ENCODE measurements at regions of chr10 and their contacts with region 1.

Region 1: DNA sequence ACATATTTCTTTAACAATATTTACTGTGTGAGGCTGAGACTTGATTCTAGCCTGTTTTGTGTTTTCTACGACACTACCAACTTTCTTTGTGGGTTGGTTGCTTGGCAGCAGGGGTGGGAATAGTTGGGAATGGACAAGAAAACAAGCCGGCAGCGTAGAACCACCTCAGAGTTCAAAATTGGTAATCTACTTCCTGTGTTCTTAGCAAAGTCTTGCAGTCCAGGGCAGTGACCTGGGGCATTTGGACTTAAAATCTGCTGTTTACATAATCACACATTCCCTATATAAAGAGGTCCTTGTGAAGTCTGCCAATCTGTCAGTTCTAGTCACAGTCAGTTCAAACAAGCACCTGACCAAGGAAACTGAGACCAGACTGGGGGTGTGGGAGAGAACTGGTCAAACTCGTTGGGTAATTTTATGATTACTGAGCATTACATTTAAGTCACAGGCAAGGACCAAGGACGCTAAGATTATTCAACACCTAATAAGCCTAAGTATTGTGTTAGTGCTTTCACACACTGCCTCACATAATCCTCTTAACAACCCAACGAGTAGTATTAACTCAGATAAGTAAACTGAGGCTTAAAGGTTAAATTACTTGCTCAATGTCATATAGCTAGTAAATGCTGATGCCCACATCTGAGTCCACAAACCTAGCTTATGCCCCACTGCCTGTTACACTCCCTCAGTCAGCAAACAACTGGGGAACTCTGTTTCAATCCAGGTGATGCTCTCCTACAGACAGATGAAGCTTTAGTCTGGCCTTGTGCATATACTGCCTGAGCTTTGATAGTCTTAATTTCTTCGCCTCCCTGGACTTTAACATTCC is 167.7 kb downstream of the CPEB3 start:
- DNase-seq: no peak
- H3K4me3 ChIP-seq: no peak overlapping the region
- H3K4me3 Mint-ChIP-seq: no peak overlapping the region
- H3K27ac ChIP-seq: no peak overlapping the region
- H3K27ac Mint-ChIP-seq: no peak overlapping the region
- H3K4me1 ChIP-seq: no peaks in the 10 kb centered on the region
- H3K4me1 Mint-ChIP-seq: peaks cover 0 to 1% (median 0%) of the 10 kb centered on the region in 4 donors
- H3K27me3 ChIP-seq: no peaks in the 10 kb centered on the region
- H3K27me3 Mint-ChIP-seq: no peaks in the 10 kb centered on the region

Region 2: GRCh38 chr10:92010047-92010735 is 113.0 kb before region 1 on chr10:
- CTCF ChIA-PET with region 1: no interaction called
- POLR2A ChIA-PET with region 1: no interaction called
- intact Hi-C with region 1: no loop called
- DNase-seq: no peak
- H3K4me3 ChIP-seq: no peak overlapping the region
- H3K4me3 Mint-ChIP-seq: no peak overlapping the region
- H3K27ac ChIP-seq: no peak overlapping the region
- H3K27ac Mint-ChIP-seq: peak overlapping the region in 4 of 7 donors; percentile 1 to 69 (median 17)
- H3K4me1 ChIP-seq: peaks cover 9% of the 10 kb centered on the region
- H3K4me1 Mint-ChIP-seq: peaks cover 6 to 10% (median 8%) of the 10 kb centered on the region in 4 donors
- H3K27me3 ChIP-seq: no peaks in the 10 kb centered on the region
- H3K27me3 Mint-ChIP-seq: no peaks in the 10 kb centered on the region

Region 3: DNA sequence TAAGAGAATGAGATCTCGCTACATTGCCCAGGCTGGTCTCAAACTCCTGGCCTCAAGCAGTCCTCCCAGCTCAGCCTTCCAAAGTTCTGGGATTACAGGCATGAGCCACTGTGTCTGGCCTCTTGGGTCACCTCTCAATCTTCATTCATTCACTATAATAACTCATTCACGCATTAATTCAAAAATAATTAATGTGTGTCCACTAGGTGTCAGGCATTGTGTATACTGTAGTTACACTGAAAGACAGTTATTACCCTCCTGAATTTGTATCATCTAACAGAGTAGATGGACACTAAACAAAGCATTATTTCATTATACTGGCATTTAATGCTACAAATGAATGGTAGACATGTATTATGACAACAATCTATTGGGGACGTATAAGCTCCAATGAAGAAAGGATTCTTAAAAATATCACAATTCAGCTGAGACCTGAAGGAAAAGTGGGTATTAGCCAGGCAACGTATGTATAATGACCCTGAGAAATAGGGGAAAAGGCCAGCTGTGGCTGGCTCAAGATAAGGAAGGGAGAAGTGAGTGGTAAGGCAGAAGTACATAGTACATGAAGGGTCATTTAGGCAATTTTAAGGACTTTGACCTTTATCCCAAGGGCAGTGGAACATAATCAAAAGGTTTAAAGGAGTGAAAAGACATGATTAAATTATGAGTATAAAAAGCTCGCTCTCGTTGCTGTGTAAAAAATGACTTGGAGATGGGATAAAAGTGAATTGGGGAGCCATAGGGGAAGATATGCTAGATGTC is 48.8 kb before region 1 on chr10:
- CTCF ChIA-PET with region 1: no interaction called
- POLR2A ChIA-PET with region 1: no interaction called
- intact Hi-C with region 1: loop called (anchors 1 kb)
- DNase-seq: no peak
- H3K4me3 ChIP-seq: no peak overlapping the region
- H3K4me3 Mint-ChIP-seq: no peak overlapping the region
- H3K27ac ChIP-seq: no peak overlapping the region
- H3K27ac Mint-ChIP-seq: no peak overlapping the region
- H3K4me1 ChIP-seq: no peaks in the 10 kb centered on the region
- H3K4me1 Mint-ChIP-seq: no peaks in the 10 kb centered on the region
- H3K27me3 ChIP-seq: no peaks in the 10 kb centered on the region
- H3K27me3 Mint-ChIP-seq: no peaks in the 10 kb centered on the region

Region 4: DNA sequence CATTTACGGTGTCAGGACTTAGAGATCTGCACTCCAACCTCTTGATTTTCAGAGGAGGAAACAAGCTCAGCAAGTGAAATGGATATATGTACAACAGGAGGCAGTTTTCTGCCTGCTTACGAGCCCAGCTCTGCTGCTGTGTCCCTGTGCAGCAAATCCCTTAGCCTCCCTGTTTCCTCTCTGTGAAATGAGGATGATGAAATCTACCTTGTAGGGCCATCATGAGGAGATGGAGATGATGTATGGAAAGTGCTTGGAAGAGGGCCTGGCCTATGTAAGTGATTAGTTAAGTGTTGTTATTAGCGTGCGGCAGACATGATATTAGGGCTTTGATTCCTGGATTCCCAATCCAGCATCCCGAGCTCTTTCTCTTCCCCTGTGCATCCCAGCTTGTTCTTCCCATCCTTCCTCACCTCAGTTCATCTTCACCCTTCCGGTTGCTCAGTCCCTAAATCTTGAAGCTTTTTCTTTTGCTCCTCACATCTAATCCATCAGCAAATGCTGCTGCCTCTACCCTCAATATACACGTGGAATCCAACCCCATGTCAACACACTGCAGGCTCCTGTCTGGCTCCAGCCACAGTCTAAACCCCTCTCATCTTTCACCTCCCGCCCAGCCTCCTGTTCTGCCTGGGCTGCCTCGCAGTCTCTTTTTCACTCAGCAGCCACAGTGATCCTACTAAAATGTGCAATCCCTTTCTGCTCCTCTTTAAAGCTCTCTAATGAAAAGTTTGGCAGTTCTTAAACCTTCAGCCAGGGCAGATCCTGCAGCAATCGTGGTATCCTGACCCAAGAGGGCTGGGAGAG is 281.7 kb after region 1 on chr10:
- CTCF ChIA-PET with region 1: no interaction called
- POLR2A ChIA-PET with region 1: no interaction called
- intact Hi-C with region 1: no loop called
- DNase-seq: no peak
- H3K4me3 ChIP-seq: no peak overlapping the region
- H3K4me3 Mint-ChIP-seq: no peak overlapping the region
- H3K27ac ChIP-seq: no peak overlapping the region
- H3K27ac Mint-ChIP-seq: no peak overlapping the region
- H3K4me1 ChIP-seq: no peaks in the 10 kb centered on the region
- H3K4me1 Mint-ChIP-seq: no peaks in the 10 kb centered on the region
- H3K27me3 ChIP-seq: no peaks in the 10 kb centered on the region
- H3K27me3 Mint-ChIP-seq: peaks cover 2 to 9% of the 10 kb centered on the region in 2 donors

Measured in CD4-positive, alpha-beta memory T cell (primary cell).